ENCODE measurements at regions of chr6 and their contacts with region 1.

Region 1: GRCh38 chr6:116010790-116011401 is 49.8 kb downstream of the FRK start:
- DNase-seq: peak; percentile 68 to 79 (median 71)
- ATAC-seq: peak; percentile 74 to 87 (median 77)
- H3K4me3 ChIP-seq: no peak overlapping the region
- H3K27ac ChIP-seq: peak overlapping the region in 2 of 3 donors; percentile 52 to 55
- H3K4me1 ChIP-seq: peaks cover 0 to 62% (median 23%) of the 10 kb centered on the region in 4 donors
- H3K27me3 ChIP-seq: no peaks in the 10 kb centered on the region
- CTCF ChIP-seq: peak; percentile 82 to 96 (median 86)
- POLR2A ChIP-seq: no peak

Region 2: GRCh38 chr6:115932481-115932880 is 78.4 kb before region 1 on chr6:
- intact Hi-C with region 1: no loop called
- DNase-seq: no peak
- ATAC-seq: no peak
- H3K4me3 ChIP-seq: no peak overlapping the region
- H3K27ac ChIP-seq: no peak overlapping the region
- H3K4me1 ChIP-seq: no peaks in the 10 kb centered on the region
- H3K27me3 ChIP-seq: no peaks in the 10 kb centered on the region
- CTCF ChIP-seq: no peak
- POLR2A ChIP-seq: no peak

Region 3: GRCh38 chr6:116096979-116097816 is 86.3 kb after region 1 on chr6:
- intact Hi-C with region 1: loop called in 1 of 2 experiments (anchors 5 kb)
- DNase-seq: no peak
- ATAC-seq: no peak
- H3K4me3 ChIP-seq: no peak overlapping the region
- H3K27ac ChIP-seq: no peak overlapping the region
- H3K4me1 ChIP-seq: peaks cover 3 to 37% (median 17%) of the 10 kb centered on the region in 4 donors
- H3K27me3 ChIP-seq: no peaks in the 10 kb centered on the region
- CTCF ChIP-seq: peak; percentile 47 to 72 (median 67)
- POLR2A ChIP-seq: no peak

Measured in right lobe of liver (tissue), 6 donors.